ENCODE measurements at regions of chr5 and their contacts with region 1.

Region 1: DNA sequence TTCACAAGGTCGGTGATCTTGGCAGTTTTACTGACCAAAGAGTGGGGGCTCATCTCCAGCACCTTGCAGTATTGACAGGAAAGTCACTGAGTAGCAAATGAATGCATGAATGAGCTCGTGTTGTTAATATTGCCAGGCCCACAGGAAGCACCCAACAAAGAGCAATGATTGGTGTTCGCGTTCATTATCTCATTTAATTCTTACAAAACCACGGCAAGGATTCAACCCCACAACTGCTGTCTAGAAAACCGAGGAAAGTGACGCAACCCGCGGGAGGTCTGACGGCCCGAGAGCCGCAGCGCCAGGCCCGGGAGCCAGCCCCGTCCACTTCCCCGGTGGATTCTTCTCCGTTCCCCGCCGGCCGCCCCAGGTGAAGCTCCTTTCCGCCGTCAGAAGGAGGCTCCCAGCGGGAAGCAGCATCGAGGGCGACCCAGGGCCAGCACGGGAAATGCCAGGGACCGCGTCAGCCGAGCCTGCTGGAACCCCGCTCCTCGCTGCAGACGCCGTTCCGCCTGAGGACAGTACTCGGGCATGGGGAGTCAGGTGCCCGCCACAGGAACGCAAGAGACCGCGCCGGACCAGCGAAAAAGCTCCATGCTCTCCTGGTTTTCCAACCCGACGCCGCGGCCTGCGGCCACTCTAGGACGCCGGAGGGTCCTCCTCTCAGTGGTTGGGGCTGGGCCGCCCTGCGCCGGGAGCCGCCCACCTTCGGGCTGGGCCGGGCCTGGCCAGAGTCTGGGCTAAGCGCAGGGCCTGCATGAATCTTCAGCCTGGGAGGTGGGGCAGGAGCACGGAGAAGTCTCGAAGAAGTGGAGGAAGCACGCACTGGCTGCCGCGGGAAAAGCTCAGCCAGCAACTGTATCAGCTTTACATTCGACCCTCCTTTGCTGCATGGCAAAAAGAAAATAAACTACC is 19.8 kb upstream of the FER start:
- DNase-seq: peak; percentile 73
- H3K4me3 Mint-ChIP-seq: peak overlapping the region; percentile 79
- H3K27ac Mint-ChIP-seq: peak overlapping the region; percentile 43
- H3K4me1 Mint-ChIP-seq: peaks cover 19% of the 10 kb centered on the region
- H3K27me3 Mint-ChIP-seq: peaks cover 73% of the 10 kb centered on the region

Region 2: GRCh38 chr5:108381954-108382783 is 345.7 kb before region 1 on chr5 and contains the start of gene FBXL17:
- intact Hi-C with region 1: loop called (anchors 2 kb)
- DNase-seq: peak; percentile 97
- H3K4me3 Mint-ChIP-seq: peak within 1 kb of the TSS; percentile 84
- H3K27ac Mint-ChIP-seq: peak within 1 kb of the TSS; percentile 91
- H3K4me1 Mint-ChIP-seq: peaks cover 22% of the 10 kb centered on the region
- H3K27me3 Mint-ChIP-seq: no peaks in the 10 kb centered on the region
- total RNA-seq, gene FBXL17: 7.5 and 8.6 TPM in 2 replicates

Region 3: GRCh38 chr5:108739906-108740305 is 12.0 kb after region 1 on chr5:
- intact Hi-C with region 1: no loop called
- DNase-seq: no peak
- H3K4me3 Mint-ChIP-seq: no peak overlapping the region
- H3K27ac Mint-ChIP-seq: no peak overlapping the region
- H3K4me1 Mint-ChIP-seq: no peaks in the 10 kb centered on the region
- H3K27me3 Mint-ChIP-seq: peaks cover 38% of the 10 kb centered on the region

Measured in activated CD4-positive, alpha-beta T cell treated with anti-CD3 and anti-CD28 coated beads, Interleukin-2, amount 10 ng/mL, durations not matched to agents 24 days and 14 days (primary cell).